Heart right ventricle (tissue), 16 donors: ENCODE measurements at regions of chr10 and their contacts with region 1.

Region 1: DNA sequence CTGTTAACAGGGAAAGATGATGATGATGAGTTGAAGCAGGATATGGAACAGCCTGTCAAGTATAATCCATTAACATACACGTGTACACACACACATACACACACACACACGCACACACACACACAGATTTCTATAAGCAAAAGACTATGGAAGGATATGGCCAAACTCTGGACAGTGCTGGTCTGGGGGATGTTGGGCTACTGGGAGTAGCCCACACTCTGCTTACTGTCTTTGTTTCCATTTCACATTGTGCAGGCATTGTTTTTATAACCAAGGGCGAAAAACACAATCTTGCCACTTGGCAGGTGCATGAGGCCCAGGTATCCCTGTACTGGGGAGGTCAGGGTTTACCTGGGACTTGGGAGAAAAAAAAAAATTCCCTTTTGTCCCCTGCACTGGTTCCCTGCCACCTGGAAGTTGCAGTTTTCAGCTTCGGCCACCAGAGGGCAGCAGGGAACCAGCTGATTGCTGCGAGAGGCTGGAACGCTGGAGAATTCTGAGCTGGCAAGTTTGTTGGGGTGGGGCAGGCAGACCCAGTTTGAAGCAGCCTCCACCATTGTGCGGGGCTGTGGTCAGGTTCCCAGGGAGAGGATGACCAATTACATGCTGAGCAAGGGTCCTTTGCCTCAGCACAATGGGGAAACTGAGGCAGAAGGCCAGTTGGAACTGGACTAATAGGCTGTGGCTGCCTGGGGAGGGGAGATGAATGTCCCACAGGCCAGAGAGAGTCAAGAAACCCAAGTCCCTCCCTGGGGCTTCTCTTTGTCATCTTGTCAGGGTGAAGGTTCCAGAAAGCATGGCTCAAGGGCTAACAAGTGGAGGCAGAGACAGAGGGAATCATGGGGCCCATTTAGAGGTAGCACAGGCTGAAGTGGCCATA is 27.3 kb downstream of the PPIF start:
- DNase-seq: peak; percentile 82
- ATAC-seq: peak; percentile 29 to 79 (median 58)
- H3K4me3 ChIP-seq: no peak overlapping the region
- H3K27ac ChIP-seq: no peak overlapping the region
- H3K4me1 ChIP-seq: peaks cover 7 to 20% (median 11%) of the 10 kb centered on the region in 9 donors
- H3K27me3 ChIP-seq: no peaks in the 10 kb centered on the region
- CTCF ChIP-seq: peak; percentile 93 to 99 (median 98)

Region 2: GRCh38 chr10:78944723-78945312 is 429.7 kb before region 1 on chr10:
- intact Hi-C with region 1: no loop called
- DNase-seq: peak in 1 of 2 donors; percentile 65
- ATAC-seq: peak; percentile 79 to 93 (median 88)
- H3K4me3 ChIP-seq: no peak overlapping the region
- H3K27ac ChIP-seq: peak overlapping the region in 7 of 10 donors; percentile 5 to 62 (median 50)
- H3K4me1 ChIP-seq: peaks cover 0 to 32% (median 12%) of the 10 kb centered on the region in 9 donors
- H3K27me3 ChIP-seq: no peaks in the 10 kb centered on the region
- CTCF ChIP-seq: no peak

Region 3: GRCh38 chr10:79445141-79445976 is 70.8 kb after region 1 on chr10 and contains the start of gene ZCCHC24:
- intact Hi-C with region 1: loop called in 1 of 10 experiments (anchors 5 kb)
- DNase-seq: peak; percentile 99
- ATAC-seq: peak; percentile 93 to 96 (median 95)
- H3K4me3 ChIP-seq: peak within 1 kb of the TSS; percentile 85 to 99 (median 96)
- H3K27ac ChIP-seq: peak within 1 kb of the TSS; percentile 92 to 99 (median 97)
- H3K4me1 ChIP-seq: peaks cover 16 to 51% (median 45%) of the 10 kb centered on the region in 9 donors
- H3K27me3 ChIP-seq: no peaks in the 10 kb centered on the region
- CTCF ChIP-seq: no peak
- total RNA-seq, gene ZCCHC24: 32.0 to 59.0 (median 49.0) TPM

Region 4: DNA sequence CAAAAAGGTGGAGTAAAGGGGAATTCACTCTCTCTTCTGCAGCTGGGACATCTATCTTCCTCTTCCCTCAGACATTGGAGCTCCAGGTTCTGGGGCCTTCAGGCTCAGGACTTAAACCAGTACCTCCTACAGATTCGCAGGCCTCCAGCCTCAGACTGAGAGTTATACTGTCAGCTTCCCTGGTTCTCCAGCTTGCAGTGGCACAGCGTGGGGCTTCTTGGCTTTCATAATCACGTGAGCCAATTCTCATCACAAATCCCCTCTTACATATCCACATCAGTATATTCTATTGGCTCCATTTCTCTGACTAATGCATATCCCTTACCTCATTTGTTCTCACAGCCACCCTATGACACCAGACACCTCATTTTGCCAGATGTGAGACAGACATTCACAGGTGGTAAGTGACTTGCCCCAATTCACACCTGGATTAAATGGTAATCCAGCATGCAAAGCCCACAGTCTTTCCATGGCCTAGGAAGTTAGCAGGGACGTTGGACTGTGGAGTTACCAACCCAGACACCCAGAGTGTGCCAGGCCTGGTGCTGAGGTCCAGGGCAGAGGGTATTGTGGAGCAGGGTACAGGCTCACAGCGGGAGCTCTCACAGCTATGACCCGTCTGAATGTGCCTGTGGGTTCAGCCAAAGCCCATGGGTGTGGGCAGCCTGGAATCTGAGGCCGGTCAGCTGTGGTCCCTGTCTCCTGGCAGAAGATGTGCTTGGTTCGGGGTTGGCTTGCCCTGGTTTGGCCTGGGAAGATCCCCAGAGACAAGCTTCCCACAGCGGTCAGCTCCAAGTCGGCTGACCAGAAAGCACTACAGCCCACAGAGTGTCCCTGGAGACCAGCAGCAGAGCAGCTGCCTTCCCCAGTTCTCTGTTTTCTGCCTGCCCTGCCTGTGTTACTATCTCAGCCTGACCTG is 89.3 kb after region 1 on chr10:
- intact Hi-C with region 1: loop called in 9 of 10 experiments (anchors 1 to 5 kb)
- DNase-seq: peak; percentile 40 to 53
- ATAC-seq: peak in 6 of 8 donors; percentile 19 to 66 (median 36)
- H3K4me3 ChIP-seq: no peak overlapping the region
- H3K27ac ChIP-seq: peak overlapping the region in 1 of 10 donors; percentile 8
- H3K4me1 ChIP-seq: peaks cover 7 to 41% (median 29%) of the 10 kb centered on the region in 9 donors
- H3K27me3 ChIP-seq: no peaks in the 10 kb centered on the region
- CTCF ChIP-seq: no peak

Region 5: DNA sequence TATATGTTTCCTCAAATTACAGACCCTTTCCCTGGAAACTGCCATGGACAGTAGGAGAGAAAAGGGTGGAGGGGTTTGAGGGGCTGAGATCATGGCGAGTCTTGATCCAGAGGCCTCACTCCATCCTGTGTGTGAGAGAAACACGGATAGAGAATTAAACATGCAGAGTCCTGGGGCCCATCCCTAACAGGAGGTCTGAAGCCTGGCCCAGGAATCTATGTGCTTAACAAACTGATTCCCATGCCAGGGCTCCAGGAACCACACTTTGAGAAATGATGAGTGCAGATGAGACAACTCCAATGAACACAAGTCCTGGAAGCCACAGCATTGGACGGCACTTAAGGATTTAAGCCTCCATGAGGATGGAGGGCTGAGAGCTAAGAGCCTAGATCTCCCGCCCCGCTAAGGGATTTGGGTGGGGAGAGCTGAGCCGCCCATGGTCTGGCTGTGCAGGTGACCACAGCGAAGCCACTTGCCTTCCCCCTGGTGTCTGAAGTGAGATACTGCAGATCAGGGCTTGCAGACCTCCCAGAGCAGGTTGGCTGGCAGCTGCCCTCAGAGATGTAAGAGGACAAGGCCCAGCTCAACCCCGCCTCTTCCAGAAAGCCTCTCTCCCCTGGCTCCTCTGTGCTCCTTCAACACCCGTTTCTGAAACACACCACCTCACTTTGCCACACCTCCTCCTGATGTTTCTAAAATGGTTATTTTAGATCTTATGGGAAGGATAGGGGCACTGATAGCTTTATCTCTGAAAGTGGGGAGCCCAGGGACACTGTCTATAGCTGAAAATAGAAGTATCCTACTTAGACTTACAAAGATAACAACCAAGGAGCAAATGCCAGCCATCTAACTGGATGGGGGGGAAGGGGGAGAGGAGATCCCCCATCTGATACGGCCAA is 113.0 kb after region 1 on chr10:
- intact Hi-C with region 1: loop called in 9 of 10 experiments (anchors 1 to 5 kb)
- DNase-seq: peak; percentile 41 to 59
- ATAC-seq: peak; percentile 20 to 77 (median 46)
- H3K4me3 ChIP-seq: no peak overlapping the region
- H3K27ac ChIP-seq: peak overlapping the region in 7 of 10 donors; percentile 18 to 81 (median 65)
- H3K4me1 ChIP-seq: peaks cover 2 to 45% (median 11%) of the 10 kb centered on the region in 9 donors
- H3K27me3 ChIP-seq: no peaks in the 10 kb centered on the region
- CTCF ChIP-seq: peak; percentile 55 to 85 (median 77)

Region 6: DNA sequence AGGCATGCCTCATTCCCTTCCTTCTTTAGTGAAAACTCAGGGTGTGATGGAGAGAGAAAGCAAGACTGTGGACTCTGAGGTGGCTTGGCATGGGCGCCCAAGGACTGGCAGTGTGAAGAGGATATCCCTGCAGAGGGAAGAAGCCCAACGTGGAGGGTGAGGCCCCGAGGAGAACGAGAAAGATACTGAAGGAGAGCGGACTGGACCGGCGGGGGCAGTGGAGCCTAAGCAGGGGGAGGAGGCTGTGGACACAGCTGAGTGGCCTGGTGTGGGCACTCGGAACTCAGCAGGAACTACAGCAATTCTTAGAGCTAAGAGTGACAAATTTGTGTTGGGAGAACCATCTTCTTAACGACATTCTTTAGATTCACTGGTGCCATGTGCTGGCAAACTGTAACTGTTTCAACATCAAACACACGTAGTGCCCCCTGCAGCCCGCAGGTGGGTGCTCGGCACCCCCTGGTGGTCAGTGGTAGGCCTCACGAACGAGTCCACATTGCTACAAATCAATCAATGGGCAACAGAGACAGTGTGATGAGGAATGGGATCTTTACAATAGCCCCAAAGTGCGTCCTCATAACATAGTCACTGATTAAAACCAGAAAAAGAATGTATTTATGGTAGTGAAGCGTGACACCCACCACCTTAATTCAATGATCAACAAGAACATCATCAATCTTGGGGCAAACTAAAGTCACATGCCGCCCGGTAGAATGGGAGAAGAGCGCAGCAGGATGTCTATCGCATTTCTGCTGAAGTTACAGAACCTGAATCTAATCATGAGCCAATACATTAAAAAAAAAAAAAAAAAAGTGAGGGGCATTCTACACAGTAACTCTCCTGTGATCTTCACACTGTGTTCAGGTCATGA is 234.2 kb after region 1 on chr10:
- intact Hi-C with region 1: loop called in 1 of 10 experiments (anchors 10 kb)
- DNase-seq: peak in 1 of 2 donors; percentile 38
- ATAC-seq: peak in 2 of 8 donors; percentile 46 to 58
- H3K4me3 ChIP-seq: no peak overlapping the region
- H3K27ac ChIP-seq: no peak overlapping the region
- H3K4me1 ChIP-seq: no peaks in the 10 kb centered on the region
- H3K27me3 ChIP-seq: no peaks in the 10 kb centered on the region
- CTCF ChIP-seq: peak; percentile 25 to 65 (median 56)